ENCODE measurements at regions of chr1 and their contacts with region 1.

Region 1: DNA sequence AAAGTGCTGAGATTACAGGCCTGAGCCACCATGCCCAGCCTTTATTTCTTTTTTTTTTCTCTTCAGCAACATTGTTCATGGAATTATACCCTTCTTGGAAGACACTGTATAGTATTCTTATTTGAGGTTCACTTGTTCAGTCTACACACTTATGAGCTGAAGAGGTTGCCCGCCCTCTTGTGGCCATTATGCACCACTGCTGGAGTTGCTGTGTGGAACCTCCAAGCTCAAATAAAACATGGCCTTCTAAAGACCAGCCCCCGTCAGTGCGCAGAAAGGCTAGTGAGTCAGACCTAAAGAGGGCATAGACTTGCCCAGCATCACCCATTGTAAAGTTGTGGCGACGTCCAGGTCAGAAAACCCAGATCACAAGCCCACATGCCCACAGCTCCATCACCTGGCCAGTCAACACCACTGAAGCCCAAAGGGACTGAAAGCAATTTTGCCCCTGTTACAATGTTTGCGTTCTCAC is 20.4 kb downstream of the LURAP1 start:
- DNase-seq: peak; percentile 24
- ATAC-seq: peak; percentile 93
- H3K4me3 Mint-ChIP-seq: no peak overlapping the region
- H3K27ac Mint-ChIP-seq: no peak overlapping the region
- H3K4me1 Mint-ChIP-seq: peaks cover 2% of the 10 kb centered on the region
- H3K27me3 Mint-ChIP-seq: peaks cover 4% of the 10 kb centered on the region
- CTCF ChIP-seq: no peak

Region 2: DNA sequence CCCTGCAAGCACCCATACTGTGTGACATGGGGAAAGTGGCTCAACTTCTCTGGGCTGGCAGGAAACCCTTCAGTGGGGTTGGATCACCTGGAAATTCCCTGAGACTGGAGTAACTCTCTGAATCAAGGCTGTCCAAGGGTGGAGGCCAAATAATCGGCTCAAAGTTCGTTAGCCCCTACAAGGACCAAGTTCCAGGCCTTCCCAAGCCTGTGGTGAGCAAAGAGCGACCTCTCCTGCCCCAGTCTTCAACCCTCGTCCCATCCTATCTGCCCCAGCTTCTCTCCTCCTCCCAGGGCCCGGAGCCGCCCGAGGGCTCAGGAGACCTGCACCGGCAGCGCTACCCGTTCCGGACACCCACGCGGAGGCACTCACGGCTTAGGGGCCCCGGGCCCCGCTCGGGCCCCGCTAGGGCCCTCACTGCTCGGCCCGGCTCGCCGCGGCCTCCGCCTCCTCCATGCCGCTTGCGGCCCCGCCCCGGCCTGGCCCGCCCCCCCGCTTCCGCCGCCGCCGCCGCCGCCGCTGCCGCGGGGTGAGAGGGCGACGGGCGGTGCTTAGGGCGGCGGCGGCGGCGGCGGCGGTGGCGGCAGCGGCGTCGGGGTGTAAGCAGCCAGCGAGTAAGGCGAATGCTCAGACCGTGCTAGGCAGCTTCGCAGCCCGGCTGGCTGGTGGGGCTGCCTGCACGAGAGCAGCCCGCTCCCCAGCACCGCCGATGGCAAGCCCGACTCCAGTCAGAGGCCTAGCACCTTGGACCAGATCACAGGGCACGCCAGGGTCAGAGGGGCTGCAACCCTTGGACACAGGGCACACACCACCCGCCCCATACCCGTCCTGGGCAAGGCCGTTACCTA is 25.3 kb before region 1 on chr1 and contains the start of gene POMGNT1:
- CTCF ChIA-PET with region 1: interaction called, 3 read pairs
- POLR2A ChIA-PET with region 1: interaction called, 4 read pairs
- intact Hi-C with region 1: loop called (anchors 2 kb)
- DNase-seq: peak; percentile 84
- ATAC-seq: peak; percentile 95
- H3K4me3 Mint-ChIP-seq: peak within 1 kb of the TSS; percentile 85
- H3K27ac Mint-ChIP-seq: peak within 1 kb of the TSS; percentile 30
- H3K4me1 Mint-ChIP-seq: peaks cover 21% of the 10 kb centered on the region
- H3K27me3 Mint-ChIP-seq: peaks cover 4% of the 10 kb centered on the region
- CTCF ChIP-seq: no peak
- total RNA-seq, gene POMGNT1: 37.4 and 39.5 TPM in 2 replicates

Region 3: GRCh38 chr1:46278807-46279206 is 55.3 kb after region 1 on chr1:
- CTCF ChIA-PET with region 1: no interaction called
- POLR2A ChIA-PET with region 1: no interaction called
- intact Hi-C with region 1: no loop called
- DNase-seq: no peak
- ATAC-seq: no peak
- H3K4me3 Mint-ChIP-seq: no peak overlapping the region
- H3K27ac Mint-ChIP-seq: no peak overlapping the region
- H3K4me1 Mint-ChIP-seq: no peaks in the 10 kb centered on the region
- H3K27me3 Mint-ChIP-seq: no peaks in the 10 kb centered on the region
- CTCF ChIP-seq: no peak

Measured in activated B cell treated with CpG ODN at 0.5 μM for 24 hours (primary cell).